HCT116 (cell line): ENCODE measurements at regions of chr7 and their contacts with region 1.

Region 1: DNA sequence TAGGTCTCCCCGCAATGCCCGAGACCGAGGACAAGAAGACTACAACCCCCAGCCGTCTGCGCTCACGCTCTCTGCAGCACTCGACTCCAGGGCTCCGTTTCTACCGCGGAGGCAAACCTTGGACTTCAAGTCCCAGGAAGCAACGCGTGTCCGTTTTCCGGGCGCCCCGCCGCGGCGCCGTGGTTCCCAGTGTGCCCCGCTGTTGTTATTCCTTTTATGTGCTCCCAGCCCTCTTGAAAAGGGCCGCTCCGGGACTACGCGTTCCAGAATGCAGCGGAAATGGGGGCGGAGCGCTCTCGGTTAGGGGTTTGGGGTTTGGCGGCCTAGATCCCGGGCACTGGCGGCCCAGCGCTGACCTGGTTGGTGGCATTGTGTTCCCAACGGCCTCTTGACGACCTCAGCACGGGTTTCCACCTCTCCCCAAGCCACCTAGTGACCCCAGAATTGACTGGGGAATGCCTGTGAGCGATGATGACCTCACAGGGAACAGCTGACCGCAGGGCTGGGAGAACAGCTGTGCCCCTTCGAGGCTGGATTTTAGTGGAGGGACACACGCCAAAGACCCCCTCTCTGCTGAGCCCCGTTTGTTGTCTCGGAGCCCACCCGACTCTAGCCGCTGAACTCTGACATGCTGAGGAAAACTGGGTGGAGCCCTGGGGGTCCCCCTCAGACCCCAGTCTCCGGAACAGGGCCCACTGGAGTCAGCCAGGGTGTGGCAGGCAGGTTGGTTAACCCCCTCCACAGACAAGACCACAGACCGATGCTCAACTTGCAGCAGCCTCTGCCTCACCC is 488 bp upstream of the CDK5 start:
- DNase-seq: peak; percentile 99
- ATAC-seq: peak; percentile 75
- H3K4me3 ChIP-seq: peak overlapping the region; percentile 81 to 90
- H3K27ac ChIP-seq: peak overlapping the region; percentile 87
- H3K4me1 ChIP-seq: peaks cover 25 to 48% of the 10 kb centered on the region in 2 experiments
- H3K27me3 ChIP-seq: no peaks in the 10 kb centered on the region
- CTCF ChIP-seq: no peak
- POLR2A ChIP-seq: peak; percentile 71
- RAD21 ChIP-seq: no peak

Region 2: GRCh38 chr7:150945833-150946420 is 112.3 kb before region 1 on chr7:
- CTCF ChIA-PET with region 1: no interaction called
- POLR2A ChIA-PET with region 1: no interaction called
- RAD21 ChIA-PET with region 1: no interaction called
- intact Hi-C with region 1: no loop called
- DNase-seq: no peak
- ATAC-seq: no peak
- H3K4me3 ChIP-seq: no peak overlapping the region
- H3K27ac ChIP-seq: no peak overlapping the region
- H3K4me1 ChIP-seq: peaks cover 3 to 11% of the 10 kb centered on the region in 2 experiments; a peak in 1 of 4 replicates
- H3K27me3 ChIP-seq: no peaks in the 10 kb centered on the region
- CTCF ChIP-seq: no peak
- POLR2A ChIP-seq: no peak
- RAD21 ChIP-seq: no peak

Region 3: GRCh38 chr7:151028131-151028947 is 29.8 kb before region 1 on chr7 and contains the start of gene ABCB8:
- CTCF ChIA-PET with region 1: interaction called, 6 read pairs
- POLR2A ChIA-PET with region 1: interaction called, 10 read pairs
- RAD21 ChIA-PET with region 1: interaction called in 1 of 2 experiments, 5 read pairs
- intact Hi-C with region 1: loop called (anchors 1 kb)
- DNase-seq: peak; percentile 99
- ATAC-seq: peak; percentile 90
- H3K4me3 ChIP-seq: peak within 1 kb of the TSS; percentile 72
- H3K27ac ChIP-seq: peak within 1 kb of the TSS; percentile 60
- H3K4me1 ChIP-seq: peaks cover 6 to 58% of the 10 kb centered on the region in 2 experiments
- H3K27me3 ChIP-seq: no peaks in the 10 kb centered on the region
- CTCF ChIP-seq: peak in 2 of 3 experiments; percentile 41 to 46; a peak in 4 of 6 replicates
- POLR2A ChIP-seq: peak; percentile 33
- RAD21 ChIP-seq: no peak
- total RNA-seq, gene ABCB8: 55.2 TPM

Region 4: DNA sequence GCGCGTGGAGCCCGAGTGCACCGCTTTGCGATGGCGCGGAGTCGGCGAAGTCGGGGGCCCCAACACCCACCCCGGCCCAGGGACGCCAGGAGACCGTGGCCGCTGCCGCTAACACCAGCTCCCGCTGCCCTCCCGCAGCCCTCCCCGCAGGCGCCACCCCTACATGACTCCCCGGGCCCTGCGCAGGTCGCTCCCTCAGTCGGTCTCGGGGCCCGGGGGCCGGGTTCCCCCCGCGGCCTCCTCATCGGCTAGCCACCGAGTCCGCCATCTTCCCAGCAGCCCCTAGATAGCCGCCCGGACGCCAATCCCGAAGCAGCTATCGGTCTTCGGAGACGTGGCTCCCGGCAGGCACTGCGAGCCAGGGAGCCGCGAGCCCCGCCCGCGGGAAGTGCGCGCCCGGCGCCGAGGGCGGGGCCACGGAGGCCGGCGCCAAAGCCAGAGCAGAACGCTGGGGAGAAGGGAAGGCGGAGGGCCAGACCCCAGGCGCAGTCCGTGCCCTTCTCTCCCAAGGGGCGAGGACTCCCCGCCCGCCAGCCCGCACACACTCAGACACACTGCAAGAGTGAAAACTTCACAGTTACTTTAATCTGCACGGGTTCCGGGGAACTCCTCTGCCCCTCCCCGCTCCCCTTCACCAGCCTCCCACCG is 22.5 kb after region 1 on chr7 and contains the start of gene FASTK:
- CTCF ChIA-PET with region 1: interaction called, 3 read pairs
- POLR2A ChIA-PET with region 1: interaction called, 13 read pairs
- RAD21 ChIA-PET with region 1: interaction called in 1 of 2 experiments, 4 read pairs
- intact Hi-C with region 1: loop called (anchors 1 kb)
- DNase-seq: peak; percentile 65
- ATAC-seq: peak; percentile 68
- H3K4me3 ChIP-seq: peak within 1 kb of the TSS; percentile 90 to 94
- H3K27ac ChIP-seq: peak within 1 kb of the TSS; percentile 94
- H3K4me1 ChIP-seq: peaks cover 33 to 69% of the 10 kb centered on the region in 2 experiments
- H3K27me3 ChIP-seq: no peaks in the 10 kb centered on the region
- CTCF ChIP-seq: no peak
- POLR2A ChIP-seq: peak; percentile 88
- RAD21 ChIP-seq: no peak
- total RNA-seq, gene FASTK: 86.4 TPM